Posterior vena cava (tissue), 2 donors: ENCODE measurements at regions of chr5 and their contacts with region 1.

Region 1: DNA sequence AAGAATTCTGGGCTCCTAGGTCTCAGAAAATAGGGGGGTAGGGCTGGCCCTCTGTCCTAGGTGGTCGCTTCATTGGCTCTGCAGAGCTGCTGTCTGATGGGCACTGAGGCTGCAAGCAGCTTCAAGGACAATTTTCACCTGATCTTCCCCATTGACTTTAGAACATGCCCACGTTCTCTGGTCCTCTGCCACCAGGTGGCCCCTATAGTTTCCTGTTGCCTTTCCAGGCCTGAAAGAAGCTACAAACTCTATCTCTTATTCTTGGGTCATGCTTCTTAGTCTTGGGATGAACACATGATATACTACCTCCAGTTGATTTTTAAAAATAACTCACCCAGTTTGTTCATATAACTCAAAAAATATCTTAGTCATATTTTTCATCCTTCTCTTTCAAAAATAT is 26.3 kb downstream of the SPZ1 start:
- DNase-seq: no peak

Region 2: DNA sequence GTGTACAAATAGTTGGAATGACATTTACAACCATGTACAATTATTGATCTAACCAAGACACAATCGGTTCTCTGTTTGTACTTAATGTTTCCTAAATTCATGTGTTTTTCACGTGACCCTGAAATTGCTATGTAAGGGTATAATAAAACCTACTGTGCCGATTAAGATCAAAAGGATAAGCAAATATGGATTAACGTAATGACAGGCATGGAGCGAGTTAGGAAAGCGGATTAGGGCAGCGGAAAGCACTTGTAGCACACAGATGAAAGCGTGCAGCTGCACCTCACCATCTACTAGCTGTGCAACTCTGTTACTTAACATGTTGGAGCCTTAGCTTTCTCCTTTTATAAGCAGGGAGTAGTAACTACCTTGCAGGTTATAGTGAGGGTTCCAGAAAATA is 23.5 kb after region 1 on chr5:
- intact Hi-C with region 1: loop called in 1 of 2 experiments (anchors 1 kb)
- DNase-seq: no peak